SK-N-SH (cell line): ENCODE measurements at regions of chr6 and their contacts with region 1.

Region 1: GRCh38 chr6:53986165-53986720 is 125.0 kb upstream of the MLIP start:
- DNase-seq: peak; percentile 2
- H3K4me3 ChIP-seq: no peak overlapping the region; a peak in 1 of 4 replicates
- H3K27ac ChIP-seq: peak overlapping the region in 1 of 2 experiments; percentile 71; a peak in 1 of 4 replicates
- H3K4me1 ChIP-seq: peaks cover 6 to 17% of the 10 kb centered on the region in 2 experiments
- H3K27me3 ChIP-seq: no peaks in the 10 kb centered on the region
- CTCF ChIP-seq: peak; percentile 90
- EP300 ChIP-seq: no peak
- RAD21 ChIP-seq: peak; percentile 76

Region 2: GRCh38 chr6:53603386-53604116 is 382.7 kb before region 1 on chr6:
- CTCF ChIA-PET with region 1: no interaction called
- POLR2A ChIA-PET with region 1: no interaction called
- DNase-seq: no peak
- H3K4me3 ChIP-seq: no peak overlapping the region
- H3K27ac ChIP-seq: no peak overlapping the region
- H3K4me1 ChIP-seq: no peaks in the 10 kb centered on the region; a peak in 1 of 4 replicates
- H3K27me3 ChIP-seq: no peaks in the 10 kb centered on the region; the same call in 1 of the 2 replicates
- CTCF ChIP-seq: no peak
- EP300 ChIP-seq: no peak
- RAD21 ChIP-seq: no peak

Region 3: DNA sequence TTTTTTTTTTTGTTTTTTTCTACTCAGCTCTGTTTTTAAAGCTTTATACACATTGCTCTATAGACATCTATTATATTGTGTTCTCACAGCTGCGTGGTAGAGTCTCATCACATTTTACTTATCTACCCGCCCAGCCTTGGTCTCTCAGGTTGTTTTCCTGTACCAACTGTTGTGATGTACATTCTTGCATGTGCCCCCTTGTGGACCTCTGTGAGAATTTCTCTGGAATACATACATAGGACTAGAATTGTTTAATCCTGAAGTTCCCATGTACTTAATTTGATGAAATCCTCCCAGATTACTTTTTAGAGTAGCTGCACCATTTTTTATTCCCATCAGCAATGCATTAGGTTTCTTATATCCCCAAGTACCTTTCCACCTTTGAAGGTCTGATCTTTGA is 281.6 kb after region 1 on chr6:
- CTCF ChIA-PET with region 1: interaction called, 20 read pairs
- POLR2A ChIA-PET with region 1: no interaction called
- DNase-seq: peak; percentile 3
- H3K4me3 ChIP-seq: no peak overlapping the region
- H3K27ac ChIP-seq: no peak overlapping the region
- H3K4me1 ChIP-seq: 0 out of 4 replicates have a peak, but pooled peaks cover 0 to 7% of the 10 kb centered on the region in 2 experiments
- H3K27me3 ChIP-seq: no peaks in the 10 kb centered on the region
- CTCF ChIP-seq: peak; percentile 61
- EP300 ChIP-seq: no peak
- RAD21 ChIP-seq: peak; percentile 52

Region 4: DNA sequence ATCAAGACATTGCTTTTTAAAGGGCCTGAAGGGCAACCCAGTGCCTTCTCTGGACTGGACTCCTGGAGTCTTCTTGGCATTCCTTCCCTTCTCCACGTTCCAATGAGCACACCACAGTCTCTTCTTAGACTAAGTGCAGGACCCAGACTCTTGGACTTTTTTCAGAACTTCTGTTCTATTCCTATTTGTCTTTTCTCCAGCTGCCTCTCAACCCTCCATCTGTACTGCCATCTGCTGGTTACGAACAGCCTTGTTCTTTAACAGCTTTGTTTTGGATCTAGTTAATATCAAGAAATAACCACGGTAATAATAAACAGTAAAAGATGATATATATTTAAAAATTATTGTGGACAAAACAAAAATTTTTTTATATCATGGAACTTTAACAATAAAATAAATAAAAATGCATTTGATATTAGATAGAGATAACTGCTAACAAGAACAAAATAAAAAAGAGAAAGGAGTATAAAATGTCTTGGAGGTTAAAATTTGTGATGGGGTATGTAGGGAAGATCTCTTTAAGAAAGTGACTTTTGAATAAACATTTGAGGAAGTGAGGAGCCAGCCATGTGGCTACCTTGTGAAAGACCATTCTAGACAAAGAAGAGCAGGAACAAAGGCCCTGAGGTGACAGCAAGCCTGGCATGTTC is 1083.0 kb after region 1 on chr6:
- CTCF ChIA-PET with region 1: interaction called, 11 read pairs
- POLR2A ChIA-PET with region 1: no interaction called
- DNase-seq: peak; percentile 11
- H3K4me3 ChIP-seq: no peak overlapping the region
- H3K27ac ChIP-seq: no peak overlapping the region
- H3K4me1 ChIP-seq: no peaks in the 10 kb centered on the region
- H3K27me3 ChIP-seq: no peaks in the 10 kb centered on the region
- CTCF ChIP-seq: peak; percentile 76
- EP300 ChIP-seq: no peak
- RAD21 ChIP-seq: peak; percentile 69